CD8-positive, alpha-beta T cell (primary cell): ENCODE measurements at regions of chr12 and their contacts with region 1.

Region 1: GRCh38 chr12:66860752-66861750 is 182.2 kb upstream of the GRIP1 start:
- DNase-seq: peak; percentile 41 to 82 (median 68)
- ATAC-seq: peak; percentile 61
- H3K4me3 ChIP-seq: no peak overlapping the region
- H3K4me3 Mint-ChIP-seq: no peak overlapping the region
- H3K27ac ChIP-seq: no peak overlapping the region
- H3K27ac Mint-ChIP-seq: no peak overlapping the region
- H3K4me1 ChIP-seq: peaks cover 8% of the 10 kb centered on the region
- H3K4me1 Mint-ChIP-seq: peaks cover 25% of the 10 kb centered on the region
- H3K27me3 ChIP-seq: no peaks in the 10 kb centered on the region
- H3K27me3 Mint-ChIP-seq: peaks cover 4% of the 10 kb centered on the region
- CTCF ChIP-seq: peak; percentile 92

Region 2: DNA sequence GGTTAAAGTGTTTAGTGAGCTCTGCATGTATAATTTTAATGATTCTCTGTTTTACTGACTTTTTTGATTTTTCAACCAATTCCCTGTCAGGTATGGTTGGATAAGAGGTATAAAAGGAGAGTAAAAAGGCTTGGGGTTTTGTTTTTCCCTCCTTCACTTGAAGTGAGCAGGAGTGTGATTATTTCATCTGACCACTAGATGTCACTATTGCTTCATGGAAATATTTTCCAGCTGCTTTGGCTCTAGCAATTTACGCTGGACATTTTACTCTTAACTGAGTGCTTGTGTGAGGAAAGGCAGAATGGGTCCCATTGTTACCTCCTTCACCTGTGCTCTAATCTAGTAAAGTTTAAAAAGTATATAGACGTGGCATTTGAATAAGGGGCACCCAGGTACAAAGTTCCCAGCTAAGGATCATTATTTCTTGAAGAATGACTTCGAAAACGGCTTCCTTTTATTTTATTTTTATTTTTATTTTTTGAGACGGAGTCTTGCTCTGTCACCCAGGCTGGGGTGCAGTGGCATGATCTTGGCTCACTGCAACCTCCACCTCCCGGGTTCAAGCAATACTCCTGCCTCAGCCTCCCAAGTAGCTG is 1970.1 kb before region 1 on chr12:
- CTCF ChIA-PET with region 1: no interaction called
- POLR2A ChIA-PET with region 1: no interaction called
- intact Hi-C with region 1: loop called in 1 of 2 experiments (anchors 5 kb)
- DNase-seq: peak in 2 of 9 experiments; percentile 60 to 69
- ATAC-seq: peak; percentile 48
- H3K4me3 ChIP-seq: no peak overlapping the region
- H3K4me3 Mint-ChIP-seq: no peak overlapping the region
- H3K27ac ChIP-seq: no peak overlapping the region
- H3K27ac Mint-ChIP-seq: no peak overlapping the region
- H3K4me1 ChIP-seq: no peaks in the 10 kb centered on the region
- H3K4me1 Mint-ChIP-seq: no peaks in the 10 kb centered on the region
- H3K27me3 ChIP-seq: no peaks in the 10 kb centered on the region
- H3K27me3 Mint-ChIP-seq: peaks cover 27% of the 10 kb centered on the region
- CTCF ChIP-seq: peak; percentile 90

Region 3: GRCh38 chr12:66269757-66270383 is 591.2 kb before region 1 on chr12:
- CTCF ChIA-PET with region 1: interaction called, 4 read pairs
- POLR2A ChIA-PET with region 1: no interaction called
- intact Hi-C with region 1: loop called (anchors 1 to 2 kb)
- DNase-seq: peak in 3 of 9 experiments; percentile 13 to 65 (median 56)
- ATAC-seq: peak; percentile 62
- H3K4me3 ChIP-seq: no peak overlapping the region
- H3K4me3 Mint-ChIP-seq: no peak overlapping the region
- H3K27ac ChIP-seq: no peak overlapping the region
- H3K27ac Mint-ChIP-seq: no peak overlapping the region
- H3K4me1 ChIP-seq: no peaks in the 10 kb centered on the region
- H3K4me1 Mint-ChIP-seq: peaks cover 7% of the 10 kb centered on the region
- H3K27me3 ChIP-seq: no peaks in the 10 kb centered on the region
- H3K27me3 Mint-ChIP-seq: peaks cover 2% of the 10 kb centered on the region
- CTCF ChIP-seq: peak; percentile 72

Region 4: DNA sequence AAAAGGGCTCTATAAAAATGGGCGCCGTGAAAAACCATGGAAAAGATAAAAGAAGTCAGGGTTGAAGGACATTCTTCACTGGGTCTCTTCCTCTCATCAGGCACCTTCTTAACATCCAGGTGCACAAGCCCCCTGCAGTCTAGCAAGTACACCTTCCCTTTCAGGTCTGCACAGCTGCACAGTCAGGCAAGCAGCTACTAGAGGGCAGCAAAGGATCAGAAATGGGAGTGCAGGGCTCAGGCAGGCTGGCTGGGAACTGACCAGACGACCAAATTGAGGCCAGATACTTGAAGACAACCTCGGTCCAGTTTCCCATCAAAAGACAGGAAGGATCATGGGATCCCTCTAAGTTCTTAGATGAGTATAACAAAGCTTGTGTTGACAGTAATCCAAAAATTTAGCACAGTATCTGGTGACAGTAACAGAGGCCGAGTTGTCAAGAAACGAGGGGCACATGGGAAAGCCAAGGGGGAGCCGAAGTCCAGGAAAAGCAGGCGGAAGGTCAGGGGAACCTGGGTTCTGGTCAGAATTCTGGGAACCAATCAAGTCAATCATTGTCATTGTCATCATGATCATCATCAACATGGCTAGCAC is 172.1 kb before region 1 on chr12:
- CTCF ChIA-PET with region 1: interaction called, 101 read pairs
- POLR2A ChIA-PET with region 1: no interaction called
- intact Hi-C with region 1: loop called (anchors 1 kb)
- DNase-seq: peak; percentile 6 to 69 (median 33)
- ATAC-seq: peak; percentile 56
- H3K4me3 ChIP-seq: no peak overlapping the region
- H3K4me3 Mint-ChIP-seq: no peak overlapping the region
- H3K27ac ChIP-seq: no peak overlapping the region
- H3K27ac Mint-ChIP-seq: no peak overlapping the region
- H3K4me1 ChIP-seq: no peaks in the 10 kb centered on the region
- H3K4me1 Mint-ChIP-seq: peaks cover 2% of the 10 kb centered on the region
- H3K27me3 ChIP-seq: peaks cover 0 to 5% of the 10 kb centered on the region in 2 experiments
- H3K27me3 Mint-ChIP-seq: peaks cover 7% of the 10 kb centered on the region
- CTCF ChIP-seq: peak; percentile 47

Region 5: DNA sequence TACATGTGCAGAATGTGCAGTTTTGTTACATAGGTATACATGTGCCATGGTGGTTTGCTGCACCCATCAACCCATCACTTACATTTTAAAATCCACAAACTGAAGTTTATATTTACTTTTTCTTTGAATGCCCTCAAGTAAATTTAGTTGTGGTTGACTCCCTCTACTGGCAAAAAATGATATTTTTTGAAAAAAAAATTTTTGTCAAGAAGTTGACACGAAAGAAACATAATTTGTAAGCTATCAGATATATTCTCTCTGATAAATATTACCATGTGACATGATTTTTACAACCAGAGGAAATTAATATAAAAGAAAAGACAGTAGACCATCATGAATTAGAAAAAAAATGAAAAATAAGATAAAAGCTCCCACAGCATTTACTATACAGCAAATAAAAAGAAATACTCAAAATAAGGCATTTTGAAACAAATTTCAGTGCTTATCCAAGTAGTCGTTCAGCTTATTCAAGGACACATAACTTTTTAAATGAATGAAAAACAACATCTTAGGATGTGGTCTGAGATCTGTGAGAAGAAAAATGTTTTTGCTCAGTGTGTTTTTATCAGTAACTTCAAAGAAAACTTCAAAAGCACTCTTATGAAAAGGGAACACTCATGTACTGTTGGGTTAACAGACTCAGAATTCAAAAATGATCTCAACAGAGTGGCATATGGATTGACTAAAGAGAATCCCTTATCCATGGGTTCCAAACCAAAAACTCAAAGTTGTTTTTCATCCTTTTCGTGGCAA is 152.2 kb before region 1 on chr12:
- CTCF ChIA-PET with region 1: interaction called, 26 read pairs
- POLR2A ChIA-PET with region 1: interaction called, 8 read pairs
- intact Hi-C with region 1: no loop called
- DNase-seq: peak in 2 of 9 experiments; percentile 26 to 63
- ATAC-seq: peak; percentile 86
- H3K4me3 ChIP-seq: no peak overlapping the region
- H3K4me3 Mint-ChIP-seq: peak overlapping the region; percentile 46
- H3K27ac ChIP-seq: peak overlapping the region; percentile 24 to 41
- H3K27ac Mint-ChIP-seq: peak overlapping the region; percentile 78
- H3K4me1 ChIP-seq: peaks cover 37% of the 10 kb centered on the region
- H3K4me1 Mint-ChIP-seq: peaks cover 48% of the 10 kb centered on the region
- H3K27me3 ChIP-seq: no peaks in the 10 kb centered on the region
- H3K27me3 Mint-ChIP-seq: no peaks in the 10 kb centered on the region
- CTCF ChIP-seq: peak; percentile 76

Region 6: DNA sequence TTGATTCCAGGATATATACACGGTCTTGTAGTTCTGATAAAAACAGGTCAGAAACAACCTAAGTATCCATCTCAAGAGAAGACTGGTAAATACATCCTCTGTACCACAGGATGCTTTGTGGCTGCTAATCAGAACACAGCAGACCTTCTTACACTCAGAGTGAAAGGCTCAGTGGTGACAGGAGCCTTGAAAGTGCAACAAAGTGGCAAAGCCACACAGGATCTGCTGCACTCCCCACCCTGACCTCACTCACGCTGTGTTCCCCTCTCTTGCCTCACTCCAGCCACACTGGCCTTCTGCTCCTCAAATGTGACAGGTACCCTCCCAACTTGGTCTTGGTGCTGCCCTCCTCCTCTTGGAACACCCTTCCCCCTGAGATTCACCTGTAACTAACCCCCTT is 84.1 kb before region 1 on chr12:
- CTCF ChIA-PET with region 1: no interaction called
- POLR2A ChIA-PET with region 1: no interaction called
- intact Hi-C with region 1: loop called in 1 of 2 experiments (anchors 5 kb)
- DNase-seq: peak; percentile 1 to 79 (median 40)
- ATAC-seq: peak; percentile 94
- H3K4me3 ChIP-seq: no peak overlapping the region
- H3K4me3 Mint-ChIP-seq: peak overlapping the region; percentile 75
- H3K27ac ChIP-seq: peak overlapping the region; percentile 17 to 56
- H3K27ac Mint-ChIP-seq: peak overlapping the region; percentile 96
- H3K4me1 ChIP-seq: peaks cover 36% of the 10 kb centered on the region
- H3K4me1 Mint-ChIP-seq: peaks cover 51% of the 10 kb centered on the region
- H3K27me3 ChIP-seq: no peaks in the 10 kb centered on the region
- H3K27me3 Mint-ChIP-seq: no peaks in the 10 kb centered on the region
- CTCF ChIP-seq: no peak

Region 7: GRCh38 chr12:66947119-66947518 is 86.1 kb after region 1 on chr12:
- CTCF ChIA-PET with region 1: no interaction called
- POLR2A ChIA-PET with region 1: no interaction called
- intact Hi-C with region 1: no loop called
- DNase-seq: no peak
- ATAC-seq: no peak
- H3K4me3 ChIP-seq: no peak overlapping the region
- H3K4me3 Mint-ChIP-seq: no peak overlapping the region
- H3K27ac ChIP-seq: no peak overlapping the region
- H3K27ac Mint-ChIP-seq: no peak overlapping the region
- H3K4me1 ChIP-seq: no peaks in the 10 kb centered on the region
- H3K4me1 Mint-ChIP-seq: no peaks in the 10 kb centered on the region
- H3K27me3 ChIP-seq: no peaks in the 10 kb centered on the region
- H3K27me3 Mint-ChIP-seq: peaks cover 2% of the 10 kb centered on the region
- CTCF ChIP-seq: no peak